Activated CD4-positive, alpha-beta memory T cell treated with anti-CD3 and anti-CD28 coated beads for 36 hours (primary cell): ENCODE measurements at regions of chr10 and their contacts with region 1.

Region 1: GRCh38 chr10:30534465-30535144 is 94.9 kb downstream of the LYZL2 start:
- DNase-seq: peak; percentile 78
- H3K4me3 Mint-ChIP-seq: no peak overlapping the region
- H3K27ac Mint-ChIP-seq: no peak overlapping the region
- H3K4me1 Mint-ChIP-seq: peaks cover 20% of the 10 kb centered on the region
- H3K27me3 Mint-ChIP-seq: no peaks in the 10 kb centered on the region

Region 2: DNA sequence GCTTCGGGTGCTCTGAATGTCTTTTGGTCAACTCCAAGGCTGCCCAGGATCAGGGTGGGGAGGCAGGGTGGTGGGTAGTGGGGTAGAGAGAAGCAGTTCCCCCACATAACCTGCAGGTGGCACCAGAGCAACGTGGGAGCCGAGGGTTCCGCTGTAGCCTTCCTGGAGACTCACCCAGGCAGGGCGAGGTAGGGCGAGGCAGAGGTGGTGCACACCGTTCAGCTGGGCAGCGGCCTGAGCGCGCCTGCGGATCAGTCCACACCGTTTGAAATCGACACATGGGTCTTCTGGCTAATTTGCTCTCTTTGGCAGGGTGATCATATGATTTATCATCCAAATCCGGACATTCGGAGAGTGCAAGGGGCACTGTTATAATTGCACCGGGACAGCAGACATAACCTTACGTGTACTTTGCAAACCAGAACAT is 142.0 kb before region 1 on chr10:
- CTCF ChIA-PET with region 1: interaction called, 76 read pairs
- POLR2A ChIA-PET with region 1: no interaction called
- intact Hi-C with region 1: loop called (anchors 1 kb)
- DNase-seq: peak; percentile 84
- H3K4me3 Mint-ChIP-seq: peak overlapping the region; percentile 24
- H3K27ac Mint-ChIP-seq: no peak overlapping the region
- H3K4me1 Mint-ChIP-seq: peaks cover 2% of the 10 kb centered on the region
- H3K27me3 Mint-ChIP-seq: peaks cover 18% of the 10 kb centered on the region